WTC11 (cell line): ENCODE measurements at regions of chr7 and their contacts with region 1.

Region 1: GRCh38 chr7:141674702-141675101 is 27.3 kb downstream of the DENND11 start:
- DNase-seq: peak; percentile 72
- ATAC-seq: peak; percentile 99
- H3K4me3 Mint-ChIP-seq: no peak overlapping the region
- H3K27ac Mint-ChIP-seq: no peak overlapping the region; the same call in 1 of the 2 replicates
- H3K4me1 Mint-ChIP-seq: peaks cover 7% of the 10 kb centered on the region
- H3K27me3 Mint-ChIP-seq: no peaks in the 10 kb centered on the region
- CTCF ChIP-seq: peak; percentile 50; the same call in 1 of the 2 replicates

Region 2: GRCh38 chr7:141654551-141654950 is 20.2 kb before region 1 on chr7:
- CTCF ChIA-PET with region 1: interaction called, 26 read pairs
- POLR2A ChIA-PET with region 1: no interaction called
- DNase-seq: peak; percentile 57
- ATAC-seq: peak; percentile 82
- H3K4me3 Mint-ChIP-seq: no peak overlapping the region
- H3K27ac Mint-ChIP-seq: peak overlapping the region; percentile 48; the same call in 1 of the 2 replicates
- H3K4me1 Mint-ChIP-seq: peaks cover 28% of the 10 kb centered on the region
- H3K27me3 Mint-ChIP-seq: no peaks in the 10 kb centered on the region
- CTCF ChIP-seq: peak; percentile 29; the same call in 1 of the 2 replicates

Region 3: GRCh38 chr7:141660259-141660658 is 14.4 kb before region 1 on chr7:
- CTCF ChIA-PET with region 1: interaction called, 26 read pairs
- POLR2A ChIA-PET with region 1: no interaction called
- DNase-seq: no peak
- ATAC-seq: no peak
- H3K4me3 Mint-ChIP-seq: no peak overlapping the region
- H3K27ac Mint-ChIP-seq: 0 out of 2 replicates have a peak overlapping the region, but pooled peaks have one; percentile 12
- H3K4me1 Mint-ChIP-seq: no peaks in the 10 kb centered on the region
- H3K27me3 Mint-ChIP-seq: no peaks in the 10 kb centered on the region
- CTCF ChIP-seq: no peak

Region 4: DNA sequence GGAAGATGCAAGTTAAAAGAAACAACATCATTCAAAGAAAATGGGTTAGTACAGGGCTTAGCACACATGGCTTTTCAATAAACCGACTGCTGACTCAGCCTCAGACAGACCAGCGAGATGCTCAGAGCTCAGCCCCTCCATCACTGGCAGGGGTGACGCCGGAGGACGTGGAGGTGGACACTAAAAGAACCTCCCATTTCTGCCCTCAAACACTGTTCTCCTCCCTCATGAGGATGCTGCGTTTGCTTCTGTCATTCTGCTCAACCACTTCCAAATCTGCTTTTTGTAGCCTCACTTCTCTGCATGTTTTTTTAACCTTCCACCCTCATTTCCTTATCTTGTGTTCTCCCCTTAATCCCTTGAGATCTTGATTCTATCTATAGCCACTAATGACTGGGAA is 12.0 kb after region 1 on chr7:
- CTCF ChIA-PET with region 1: interaction called, 14 read pairs
- POLR2A ChIA-PET with region 1: no interaction called
- DNase-seq: no peak
- ATAC-seq: no peak
- H3K4me3 Mint-ChIP-seq: no peak overlapping the region
- H3K27ac Mint-ChIP-seq: peak overlapping the region; percentile 11; the same call in 1 of the 2 replicates
- H3K4me1 Mint-ChIP-seq: peaks cover 17% of the 10 kb centered on the region
- H3K27me3 Mint-ChIP-seq: no peaks in the 10 kb centered on the region
- CTCF ChIP-seq: no peak

Region 5: GRCh38 chr7:141754939-141755338 is 80.2 kb after region 1 on chr7:
- CTCF ChIA-PET with region 1: no interaction called
- POLR2A ChIA-PET with region 1: no interaction called
- DNase-seq: peak; percentile 47
- ATAC-seq: peak; percentile 77
- H3K4me3 Mint-ChIP-seq: no peak overlapping the region
- H3K27ac Mint-ChIP-seq: no peak overlapping the region
- H3K4me1 Mint-ChIP-seq: no peaks in the 10 kb centered on the region
- H3K27me3 Mint-ChIP-seq: no peaks in the 10 kb centered on the region
- CTCF ChIP-seq: peak; percentile 47